ENCODE measurements at regions of chr10 and their contacts with region 1.

Region 1: GRCh38 chr10:123559066-123559822 is 106.9 kb upstream of the GPR26 start:
- DNase-seq: peak; percentile 85
- H3K4me3 ChIP-seq: peak overlapping the region; percentile 9 to 17
- H3K27ac ChIP-seq: no peak overlapping the region
- H3K4me1 ChIP-seq: no peaks in the 10 kb centered on the region
- H3K27me3 ChIP-seq: no peaks in the 10 kb centered on the region
- CTCF ChIP-seq: peak; percentile 93 to 98 (median 96)
- POLR2A ChIP-seq: no peak

Region 2: GRCh38 chr10:123135415-123136141 is 423.7 kb before region 1 on chr10 and contains the start of gene HMX3:
- intact Hi-C with region 1: loop called (anchors 5 kb)
- DNase-seq: no peak
- H3K4me3 ChIP-seq: peak within 1 kb of the TSS; percentile 21 to 43
- H3K27ac ChIP-seq: no peak within 1 kb of the TSS
- H3K4me1 ChIP-seq: peaks cover 12% of the 10 kb centered on the region
- H3K27me3 ChIP-seq: peaks cover 16% of the 10 kb centered on the region
- CTCF ChIP-seq: no peak
- POLR2A ChIP-seq: no peak
- total RNA-seq, gene HMX3: 0.25 to 0.55 TPM

Region 3: DNA sequence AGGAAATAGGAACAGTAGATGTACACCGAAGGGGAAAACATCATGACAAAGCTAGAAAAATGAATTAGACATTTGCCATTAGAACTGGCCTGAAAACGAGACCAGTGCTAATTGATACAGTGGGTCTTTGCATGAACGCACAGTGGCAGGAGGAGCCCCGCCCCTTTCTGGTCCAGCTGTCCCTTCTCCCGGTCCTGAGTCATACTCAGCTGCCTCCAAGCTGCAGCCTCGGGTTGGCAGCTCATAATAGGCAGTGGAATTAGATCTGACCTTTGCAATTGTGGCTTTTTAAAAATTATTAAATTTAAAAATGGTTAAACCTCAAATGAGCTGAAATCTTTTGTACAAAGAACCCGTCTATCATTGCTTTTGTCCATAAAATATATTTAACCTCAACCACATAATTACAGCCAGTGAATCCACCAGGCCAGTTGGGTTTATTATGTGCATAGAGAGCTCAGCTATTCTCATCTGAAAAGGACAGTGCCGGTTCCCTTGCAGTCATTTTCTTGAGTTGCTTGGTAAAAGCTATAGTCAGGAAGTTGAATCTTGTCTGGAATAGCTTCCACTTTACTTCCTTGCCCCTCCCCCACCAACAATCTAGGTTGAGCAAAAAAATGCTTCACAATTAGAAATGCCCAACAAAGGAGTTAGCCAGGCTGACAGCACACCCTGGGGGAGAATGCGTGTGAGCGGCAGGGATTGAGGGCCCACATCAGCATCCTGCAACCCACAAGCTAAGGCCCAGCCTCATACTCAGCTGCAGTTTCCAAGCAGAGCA is 258.0 kb before region 1 on chr10:
- intact Hi-C with region 1: no loop called
- DNase-seq: no peak
- H3K4me3 ChIP-seq: no peak overlapping the region
- H3K27ac ChIP-seq: no peak overlapping the region
- H3K4me1 ChIP-seq: no peaks in the 10 kb centered on the region
- H3K27me3 ChIP-seq: no peaks in the 10 kb centered on the region
- CTCF ChIP-seq: no peak
- POLR2A ChIP-seq: no peak

Region 4: DNA sequence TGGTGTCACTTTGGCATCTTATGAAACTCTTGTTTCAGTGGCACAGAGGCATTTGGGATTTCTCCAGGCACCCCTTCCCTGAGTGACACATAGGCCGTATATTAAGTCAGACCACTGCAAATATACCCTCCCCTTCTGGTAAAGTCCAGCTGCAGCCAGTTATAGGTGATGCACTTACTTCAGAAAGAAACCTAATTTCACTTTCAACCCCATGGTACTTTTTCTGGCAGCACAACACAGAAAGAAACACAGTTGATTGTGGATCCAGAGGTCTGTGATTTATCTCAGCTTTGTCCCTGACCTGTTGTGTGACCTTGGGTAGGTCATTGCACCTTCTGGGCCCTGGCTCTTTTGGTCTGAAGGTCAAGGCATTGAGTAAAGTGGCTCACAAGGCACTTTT is 231.8 kb before region 1 on chr10:
- intact Hi-C with region 1: no loop called
- DNase-seq: no peak
- H3K4me3 ChIP-seq: no peak overlapping the region
- H3K27ac ChIP-seq: no peak overlapping the region
- H3K4me1 ChIP-seq: no peaks in the 10 kb centered on the region
- H3K27me3 ChIP-seq: no peaks in the 10 kb centered on the region
- CTCF ChIP-seq: no peak
- POLR2A ChIP-seq: no peak